Dendritic cell treated with granulocyte-macrophage colony-stimulating factor and Interleukin-4, amounts not matched to agents 40 ng/mL and 50 ng/mL, for 4 days (primary cell): ENCODE measurements at regions of chr17 and their contacts with region 1.

Region 1: GRCh38 chr17:42405963-42406495 is 17.0 kb downstream of the CAVIN1 start:
- H3K4me3 Mint-ChIP-seq: no peak overlapping the region
- H3K27ac Mint-ChIP-seq: no peak overlapping the region
- H3K4me1 Mint-ChIP-seq: peaks cover 20% of the 10 kb centered on the region
- H3K27me3 Mint-ChIP-seq: peaks cover 33% of the 10 kb centered on the region

Region 2: DNA sequence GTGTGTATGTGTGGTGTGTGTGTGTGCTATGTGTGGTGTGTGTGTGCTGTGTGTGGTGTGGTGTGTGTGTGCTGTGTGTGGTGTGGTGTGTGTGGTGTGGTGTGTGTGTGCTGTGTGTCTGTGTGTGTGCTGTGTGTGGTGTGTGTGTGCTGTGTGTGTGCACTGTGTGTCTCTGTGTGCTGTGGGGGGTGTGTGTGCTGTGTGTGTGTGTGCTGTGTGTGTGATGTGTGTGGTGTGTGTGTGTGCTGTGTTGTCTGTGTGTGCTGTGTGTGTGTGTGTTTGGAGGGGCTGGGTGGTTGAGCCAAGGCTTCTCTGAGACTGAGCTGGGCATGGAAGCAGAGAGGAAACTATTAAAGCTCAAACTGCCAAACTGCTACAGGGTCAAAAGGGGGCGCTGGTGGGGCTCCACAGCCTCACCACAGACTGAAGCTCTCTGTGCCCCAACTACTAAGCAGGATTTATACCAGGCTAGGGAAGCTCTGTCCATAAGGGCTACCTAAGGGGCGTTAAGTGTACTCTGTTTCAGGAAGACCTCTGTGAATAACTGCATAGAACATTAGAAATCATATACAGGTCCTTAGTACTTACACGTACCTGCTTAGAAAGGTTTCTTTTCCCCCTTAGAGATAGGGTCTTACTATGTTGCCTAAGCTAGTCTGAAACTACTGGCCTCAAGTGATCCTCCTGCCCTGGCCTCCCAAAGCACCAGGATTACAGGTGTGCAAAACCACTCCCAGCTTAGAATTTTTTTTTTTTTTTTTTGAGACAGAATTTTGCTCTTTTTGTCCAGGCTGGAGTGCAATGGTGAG is 183.9 kb before region 1 on chr17:
- intact Hi-C with region 1: loop called (anchors 10 kb)
- H3K4me3 Mint-ChIP-seq: no peak overlapping the region
- H3K27ac Mint-ChIP-seq: peak overlapping the region; percentile 43
- H3K4me1 Mint-ChIP-seq: no peaks in the 10 kb centered on the region
- H3K27me3 Mint-ChIP-seq: no peaks in the 10 kb centered on the region

Region 3: GRCh38 chr17:42322382-42323267 is 83.4 kb before region 1 on chr17:
- intact Hi-C with region 1: loop called (anchors 1 kb)
- H3K4me3 Mint-ChIP-seq: no peak overlapping the region
- H3K27ac Mint-ChIP-seq: no peak overlapping the region
- H3K4me1 Mint-ChIP-seq: peaks cover 26% of the 10 kb centered on the region
- H3K27me3 Mint-ChIP-seq: no peaks in the 10 kb centered on the region

Region 4: DNA sequence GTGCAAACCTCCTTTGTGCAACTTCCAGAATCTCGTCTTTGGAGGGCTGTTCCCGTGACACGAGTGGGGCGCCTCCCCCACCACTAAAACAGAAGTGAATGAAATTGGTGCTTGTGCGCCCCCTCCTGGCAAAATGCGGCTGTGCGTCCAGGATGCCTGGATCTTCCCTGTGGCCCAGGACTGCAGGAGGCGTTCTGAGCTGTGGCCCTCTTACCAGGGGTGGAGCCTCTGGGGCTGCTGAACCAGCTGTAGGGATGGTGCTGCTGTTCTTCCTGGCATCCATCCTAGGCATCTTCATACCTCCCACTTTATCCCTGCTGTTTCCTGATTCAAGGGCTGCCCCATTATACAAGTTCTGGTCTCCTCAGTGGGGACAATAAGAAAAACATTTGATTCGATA is 111.5 kb after region 1 on chr17:
- intact Hi-C with region 1: loop called (anchors 5 kb)
- H3K4me3 Mint-ChIP-seq: no peak overlapping the region
- H3K27ac Mint-ChIP-seq: peak overlapping the region; percentile 88
- H3K4me1 Mint-ChIP-seq: peaks cover 62% of the 10 kb centered on the region
- H3K27me3 Mint-ChIP-seq: no peaks in the 10 kb centered on the region

Region 5: DNA sequence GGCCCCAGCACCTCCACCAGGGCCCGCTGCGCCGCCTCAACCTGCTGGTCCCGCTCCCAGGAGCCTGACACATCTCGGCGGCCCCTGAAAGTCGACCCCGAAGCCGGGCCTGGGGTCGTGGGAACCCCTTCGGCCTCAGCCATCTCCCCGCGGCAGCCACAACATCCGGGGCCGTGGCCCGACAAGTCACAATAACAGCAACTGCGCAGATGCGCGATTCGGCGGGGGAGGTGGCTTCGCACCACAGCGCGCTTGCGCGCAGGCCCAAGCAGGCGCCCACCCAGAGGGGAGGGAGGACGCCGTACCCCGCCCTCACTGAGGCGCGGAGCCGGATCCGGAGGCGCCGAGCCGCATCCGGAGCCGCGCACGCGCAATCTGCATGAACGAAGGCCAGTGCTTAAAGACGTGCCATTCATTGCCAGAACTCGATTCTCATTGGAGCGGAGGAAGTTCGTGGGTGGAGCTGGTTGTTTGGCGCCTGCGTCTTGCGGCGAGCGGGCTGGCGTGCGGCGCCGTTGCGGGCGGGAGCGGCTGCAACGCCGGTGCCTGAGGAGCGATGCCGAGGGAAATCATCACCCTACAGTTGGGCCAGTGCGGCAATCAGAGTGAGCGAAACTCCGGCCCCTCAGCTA is 203.3 kb after region 1 on chr17 and contains the starts of genes RETREG3 and TUBG1:
- intact Hi-C with region 1: no loop called
- H3K4me3 Mint-ChIP-seq: peak within 1 kb of the TSS; percentile 99
- H3K27ac Mint-ChIP-seq: peak within 1 kb of the TSS; percentile 90
- H3K4me1 Mint-ChIP-seq: peaks cover 26% of the 10 kb centered on the region
- H3K27me3 Mint-ChIP-seq: no peaks in the 10 kb centered on the region